RWPE1 (cell line): ENCODE measurements at regions of chr9 and their contacts with region 1.

Region 1: DNA sequence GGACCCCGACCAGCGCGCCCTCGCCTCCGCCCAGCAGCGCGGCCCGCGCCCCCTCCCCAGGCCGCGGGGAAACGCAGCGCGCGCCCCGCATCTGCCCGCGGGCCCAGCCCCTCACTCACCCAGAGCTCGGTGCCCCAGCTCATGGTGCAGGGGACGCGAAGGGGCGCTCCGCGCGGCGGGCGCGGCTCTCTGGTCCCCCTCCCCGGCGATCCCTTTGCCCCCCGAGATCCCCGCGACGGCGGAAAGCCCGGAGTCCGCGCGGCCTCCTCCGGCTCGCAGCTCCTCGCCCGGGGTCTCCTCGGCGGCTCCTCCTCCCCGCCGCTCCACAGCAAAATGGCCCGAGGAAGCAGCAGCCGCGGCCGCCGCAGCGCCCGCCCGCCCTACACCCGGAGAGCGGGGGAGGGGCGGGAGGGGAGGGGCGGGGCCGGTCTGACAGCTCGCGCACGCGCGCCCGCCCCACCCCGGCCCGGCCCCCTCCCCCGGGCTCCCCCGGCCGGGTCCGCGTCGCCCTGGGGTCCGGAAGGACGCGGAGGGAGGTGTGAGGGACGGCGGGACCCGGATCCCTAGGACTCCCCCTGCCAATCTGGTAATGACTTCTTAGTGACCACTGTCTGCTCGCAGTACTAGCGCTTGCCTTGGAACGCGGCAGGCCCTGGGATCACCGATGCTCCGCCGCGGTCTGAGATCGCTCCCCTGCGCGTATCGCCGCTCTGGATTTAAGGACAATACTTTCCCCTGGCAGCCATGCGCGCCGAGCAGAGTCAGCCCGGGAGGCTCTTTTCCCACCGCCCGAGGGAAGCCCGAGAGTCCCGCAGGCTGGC is at the start of gene FNBP1:
- DNase-seq: peak; percentile 94
- H3K27ac ChIP-seq: peak within 1 kb of the TSS; percentile 71
- CTCF ChIP-seq: no peak

Region 2: GRCh38 chr9:129884220-129885017 is 158.6 kb before region 1 on chr9:
- CTCF ChIA-PET with region 1: interaction called, 11 read pairs
- POLR2A ChIA-PET with region 1: no interaction called
- DNase-seq: peak; percentile 89
- H3K27ac ChIP-seq: peak overlapping the region; percentile 79
- CTCF ChIP-seq: no peak

Region 3: DNA sequence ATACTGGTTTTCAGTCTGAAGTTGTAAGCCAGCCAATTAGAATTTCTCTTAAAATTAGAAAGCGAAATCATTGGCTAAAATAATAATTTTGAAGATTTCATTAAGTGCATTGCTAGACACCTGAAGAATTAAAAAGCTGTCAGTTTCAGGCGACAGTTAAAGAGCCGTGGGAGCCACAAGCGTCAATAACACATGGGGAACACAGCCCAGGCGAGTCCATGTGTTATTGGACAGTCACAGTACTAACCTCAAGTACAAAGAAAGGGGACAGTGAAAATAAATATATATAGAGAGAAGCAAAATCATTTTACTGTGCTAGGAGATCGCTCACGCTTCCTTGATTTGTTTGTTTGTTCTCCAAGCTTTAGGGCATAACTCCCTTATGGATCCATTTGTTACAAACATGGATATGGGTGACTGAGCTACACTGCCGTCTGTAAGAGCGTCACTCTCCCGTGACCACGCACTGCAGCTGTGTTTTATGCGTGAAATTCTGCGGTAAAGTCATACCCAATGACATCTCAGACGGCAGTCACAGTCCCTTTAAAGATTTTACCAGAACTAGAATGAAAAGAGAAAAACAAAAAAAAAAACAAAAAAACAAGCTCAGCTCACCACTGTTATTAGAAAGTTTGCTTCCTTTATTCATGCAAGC is 124.6 kb before region 1 on chr9:
- CTCF ChIA-PET with region 1: no interaction called
- POLR2A ChIA-PET with region 1: interaction called, 10 read pairs
- DNase-seq: no peak
- H3K27ac ChIP-seq: no peak overlapping the region
- CTCF ChIP-seq: no peak